Mammary epithelial cell (primary cell): ENCODE measurements at regions of chr17 and their contacts with region 1.

Region 1: DNA sequence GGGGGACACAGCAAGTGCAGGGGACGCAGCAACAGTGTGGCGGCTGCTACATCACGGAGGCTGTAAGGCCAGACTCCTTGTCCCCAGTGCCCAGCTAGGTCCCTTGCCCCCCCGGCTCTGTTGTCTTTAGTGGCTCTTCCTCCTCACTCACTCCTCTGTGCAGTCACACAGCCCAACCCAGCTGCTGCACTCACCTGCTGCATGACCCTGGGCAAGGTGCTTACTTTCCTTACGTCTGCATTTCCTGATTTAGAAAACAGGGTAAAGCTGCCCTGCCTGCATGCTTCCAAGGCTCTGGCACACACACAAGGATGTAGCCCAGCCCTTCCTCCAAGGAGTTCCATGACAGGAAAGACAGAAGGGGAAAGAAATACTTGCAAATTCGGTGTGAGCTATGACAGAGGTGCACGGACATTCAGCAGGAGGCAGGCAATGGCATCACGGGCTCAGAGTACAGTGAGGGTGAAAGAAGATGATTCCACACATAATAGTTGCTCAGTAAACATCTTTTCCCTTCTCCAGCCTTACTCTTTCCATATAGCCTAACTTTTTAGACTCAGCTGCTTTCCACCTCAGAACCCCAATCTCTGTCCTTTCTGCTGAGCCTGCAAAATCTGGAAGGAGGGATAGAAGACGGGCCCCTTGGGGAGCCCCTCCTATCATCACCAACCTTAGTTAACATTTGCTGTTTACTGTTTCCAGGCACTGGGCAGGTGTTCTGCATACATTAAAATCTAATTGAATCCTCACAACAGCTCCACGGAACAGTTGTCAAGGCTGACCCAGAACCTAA is 150.9 kb downstream of the MRM1 start:
- DNase-seq: no peak
- H3K4me3 ChIP-seq: no peak overlapping the region
- H3K27ac ChIP-seq: no peak overlapping the region
- H3K4me1 ChIP-seq: no peaks in the 10 kb centered on the region
- H3K27me3 ChIP-seq: no peaks in the 10 kb centered on the region
- CTCF ChIP-seq: no peak

Region 2: DNA sequence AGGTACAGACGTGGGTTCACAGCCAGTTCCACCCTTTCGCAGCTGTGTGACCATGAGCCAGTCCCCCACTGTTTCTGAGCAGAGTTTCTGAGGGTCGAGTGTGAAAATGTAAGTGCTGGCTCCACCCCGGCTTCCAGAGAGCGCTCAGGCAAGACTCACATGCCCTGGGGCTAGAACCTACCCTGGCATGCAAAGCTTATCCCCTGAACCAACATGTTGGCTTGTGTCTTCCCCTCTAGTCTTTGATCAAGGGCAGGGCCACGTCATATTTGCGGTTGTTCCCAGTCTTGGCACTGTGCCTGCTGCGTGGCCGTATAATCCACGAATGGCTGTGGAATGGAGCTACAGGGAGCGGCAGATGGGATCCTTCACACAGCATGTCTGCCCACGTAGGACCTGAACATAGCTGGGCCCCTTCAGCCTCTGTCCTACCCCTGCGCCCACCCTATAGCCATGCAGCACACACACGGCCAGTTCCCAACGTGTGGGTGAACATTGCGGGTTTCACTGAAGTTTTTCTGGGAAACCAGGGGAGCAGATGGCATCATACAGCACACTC is 66.1 kb before region 1 on chr17:
- CTCF ChIA-PET with region 1: no interaction called
- dilution Hi-C with region 1: loop called (anchors 5 kb)
- in situ Hi-C with region 1: no loop called
- intact Hi-C with region 1: no loop called
- DNase-seq: peak; percentile 58
- H3K4me3 ChIP-seq: no peak overlapping the region
- H3K27ac ChIP-seq: no peak overlapping the region
- H3K4me1 ChIP-seq: peaks cover 8% of the 10 kb centered on the region
- H3K27me3 ChIP-seq: peaks cover 16% of the 10 kb centered on the region
- CTCF ChIP-seq: no peak

Region 3: GRCh38 chr17:36849871-36850348 is 97.6 kb after region 1 on chr17:
- CTCF ChIA-PET with region 1: no interaction called
- dilution Hi-C with region 1: loop called (anchors 5 kb)
- in situ Hi-C with region 1: no loop called
- intact Hi-C with region 1: no loop called
- DNase-seq: peak; percentile 58
- H3K4me3 ChIP-seq: no peak overlapping the region
- H3K27ac ChIP-seq: peak overlapping the region; percentile 20
- H3K4me1 ChIP-seq: peaks cover 29% of the 10 kb centered on the region
- H3K27me3 ChIP-seq: no peaks in the 10 kb centered on the region
- CTCF ChIP-seq: peak; percentile 6 to 15